Activated CD8-positive, alpha-beta memory T cell treated with anti-CD3 and anti-CD28 coated beads, Interleukin-2, amount 10 ng/mL, durations not matched to agents 7 days and 5 days (primary cell): ENCODE measurements at regions of chr1 and their contacts with region 1.

Region 1: GRCh38 chr1:204128964-204129896 is 22.6 kb downstream of the ETNK2 start:
- DNase-seq: peak; percentile 65
- ATAC-seq: peak; percentile 88
- H3K4me3 Mint-ChIP-seq: no peak overlapping the region
- H3K27ac Mint-ChIP-seq: no peak overlapping the region
- H3K4me1 Mint-ChIP-seq: peaks cover 3% of the 10 kb centered on the region
- H3K27me3 Mint-ChIP-seq: no peaks in the 10 kb centered on the region

Region 2: GRCh38 chr1:203861379-203862184 is 267.6 kb before region 1 on chr1 and contains the start of gene SNRPE:
- CTCF ChIA-PET with region 1: interaction called, 95 read pairs
- DNase-seq: peak; percentile 97
- ATAC-seq: peak; percentile 97
- H3K4me3 Mint-ChIP-seq: peak within 1 kb of the TSS; percentile 98
- H3K27ac Mint-ChIP-seq: peak within 1 kb of the TSS; percentile 95
- H3K4me1 Mint-ChIP-seq: peaks cover 25% of the 10 kb centered on the region
- H3K27me3 Mint-ChIP-seq: no peaks in the 10 kb centered on the region
- total RNA-seq, gene SNRPE: 167 to 209 TPM

Region 3: GRCh38 chr1:203871107-203871875 is 257.9 kb before region 1 on chr1:
- CTCF ChIA-PET with region 1: interaction called, 75 read pairs
- DNase-seq: no peak
- ATAC-seq: peak; percentile 78
- H3K4me3 Mint-ChIP-seq: no peak overlapping the region
- H3K27ac Mint-ChIP-seq: no peak overlapping the region
- H3K4me1 Mint-ChIP-seq: no peaks in the 10 kb centered on the region
- H3K27me3 Mint-ChIP-seq: no peaks in the 10 kb centered on the region

Region 4: GRCh38 chr1:204114606-204115005 is 14.6 kb before region 1 on chr1:
- CTCF ChIA-PET with region 1: interaction called, 10 read pairs
- DNase-seq: no peak
- ATAC-seq: no peak
- H3K4me3 Mint-ChIP-seq: no peak overlapping the region
- H3K27ac Mint-ChIP-seq: no peak overlapping the region
- H3K4me1 Mint-ChIP-seq: no peaks in the 10 kb centered on the region
- H3K27me3 Mint-ChIP-seq: no peaks in the 10 kb centered on the region

Region 5: DNA sequence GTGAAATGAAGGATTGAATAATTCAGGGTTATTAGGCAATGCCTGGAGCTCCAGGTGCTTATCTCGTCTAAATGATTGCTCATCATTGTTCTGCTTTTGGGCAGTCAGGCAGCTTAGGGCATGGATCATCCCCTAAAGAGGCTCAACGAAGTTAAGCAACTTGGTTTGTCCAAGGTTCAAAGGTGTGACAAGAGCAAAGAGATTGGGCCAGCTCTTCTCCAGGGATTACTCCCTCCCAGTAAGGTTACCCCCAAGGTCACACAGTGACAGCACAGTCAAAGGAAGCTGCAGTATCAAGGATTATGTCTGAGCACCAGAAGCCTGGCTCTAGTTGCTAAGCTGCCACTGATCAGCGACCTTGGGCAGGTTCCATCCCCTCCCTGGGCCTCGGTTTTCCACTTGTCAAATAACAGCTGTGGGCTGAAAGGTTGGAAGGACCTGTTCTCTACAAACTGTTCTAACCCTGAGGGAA is 15.8 kb after region 1 on chr1:
- CTCF ChIA-PET with region 1: interaction called, 31 read pairs
- DNase-seq: no peak
- ATAC-seq: no peak
- H3K4me3 Mint-ChIP-seq: no peak overlapping the region
- H3K27ac Mint-ChIP-seq: no peak overlapping the region
- H3K4me1 Mint-ChIP-seq: no peaks in the 10 kb centered on the region
- H3K27me3 Mint-ChIP-seq: peaks cover 1% of the 10 kb centered on the region